Heart right ventricle (tissue), 16 donors: ENCODE measurements at regions of chr13 and their contacts with region 1.

Region 1: DNA sequence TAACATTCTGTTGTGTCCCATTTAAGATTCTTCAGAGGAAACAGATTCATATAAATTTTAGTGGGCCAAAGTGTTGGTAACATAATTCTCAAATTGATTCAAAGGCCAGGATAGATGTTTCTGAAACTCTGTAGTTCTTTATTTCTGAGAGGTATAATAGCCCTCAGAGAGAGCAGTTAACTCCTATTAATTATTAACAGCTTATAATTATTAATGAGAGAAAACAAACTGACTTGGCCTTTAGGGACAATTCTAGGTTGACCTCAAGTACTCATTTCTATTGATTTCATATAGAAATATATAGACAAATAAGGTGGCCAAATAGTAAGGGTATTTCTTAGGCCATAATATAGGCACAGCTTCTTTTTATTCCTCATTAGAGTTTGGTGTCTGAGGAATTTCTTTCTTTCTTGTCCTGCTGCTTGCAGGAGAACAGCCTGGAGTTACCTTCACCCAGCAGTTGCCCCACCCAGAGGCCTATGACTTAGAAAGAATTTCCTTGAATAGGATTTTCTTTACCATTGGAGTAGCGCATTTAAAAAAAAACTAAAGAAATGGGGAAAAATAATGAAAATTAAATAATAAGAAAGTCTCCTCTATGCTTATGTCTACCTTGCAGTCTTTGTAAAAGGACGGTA is 1430.1 kb upstream of the SPRY2 start:
- DNase-seq: no peak
- ATAC-seq: no peak
- H3K4me3 ChIP-seq: no peak overlapping the region
- H3K27ac ChIP-seq: no peak overlapping the region
- H3K4me1 ChIP-seq: no peaks in the 10 kb centered on the region
- H3K27me3 ChIP-seq: no peaks in the 10 kb centered on the region
- CTCF ChIP-seq: no peak

Region 2: GRCh38 chr13:81781471-81781870 is 10.5 kb after region 1 on chr13:
- intact Hi-C with region 1: loop called in 1 of 10 experiments (anchors 1 kb)
- DNase-seq: no peak
- ATAC-seq: no peak
- H3K4me3 ChIP-seq: no peak overlapping the region
- H3K27ac ChIP-seq: no peak overlapping the region
- H3K4me1 ChIP-seq: no peaks in the 10 kb centered on the region
- H3K27me3 ChIP-seq: no peaks in the 10 kb centered on the region
- CTCF ChIP-seq: no peak